Activated naive CD4-positive, alpha-beta T cell treated with anti-CD3 and anti-CD28 coated beads, Interleukin-2, amount 10 ng/mL, durations not matched to agents 7 days and 5 days (primary cell): ENCODE measurements at regions of chr3 and their contacts with region 1.

Region 1: GRCh38 chr3:45656575-45657363 is 32.4 kb upstream of the SACM1L start:
- DNase-seq: peak; percentile 91
- H3K4me3 Mint-ChIP-seq: no peak overlapping the region
- H3K27ac Mint-ChIP-seq: peak overlapping the region; percentile 52
- H3K4me1 Mint-ChIP-seq: peaks cover 18% of the 10 kb centered on the region
- H3K27me3 Mint-ChIP-seq: no peaks in the 10 kb centered on the region

Region 2: DNA sequence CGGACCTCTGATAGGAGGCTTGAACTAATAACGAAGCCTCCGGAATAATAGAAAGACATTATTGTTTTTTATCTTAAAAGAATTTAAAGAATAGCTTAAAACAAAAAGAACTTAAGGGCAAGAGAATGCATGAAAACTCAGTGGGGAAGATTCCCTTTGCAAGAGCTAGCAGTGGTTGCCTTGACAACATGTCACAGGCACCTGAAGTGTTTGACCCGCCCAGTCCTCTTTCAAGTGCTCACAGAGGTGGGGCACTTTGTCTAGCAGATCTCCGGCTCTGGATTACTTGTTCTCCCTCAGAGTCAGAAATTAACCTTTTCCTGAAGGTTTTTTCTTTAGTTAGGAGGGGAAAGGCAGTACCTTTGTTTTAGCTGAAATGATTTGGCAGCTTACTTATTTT is 230.6 kb before region 1 on chr3:
- CTCF ChIA-PET with region 1: no interaction called
- DNase-seq: no peak
- H3K4me3 Mint-ChIP-seq: no peak overlapping the region
- H3K27ac Mint-ChIP-seq: no peak overlapping the region
- H3K4me1 Mint-ChIP-seq: peaks cover 2% of the 10 kb centered on the region
- H3K27me3 Mint-ChIP-seq: no peaks in the 10 kb centered on the region

Region 3: GRCh38 chr3:45507820-45508317 is 148.9 kb before region 1 on chr3:
- CTCF ChIA-PET with region 1: interaction called, 272 read pairs
- DNase-seq: no peak
- H3K4me3 Mint-ChIP-seq: no peak overlapping the region
- H3K27ac Mint-ChIP-seq: no peak overlapping the region
- H3K4me1 Mint-ChIP-seq: no peaks in the 10 kb centered on the region
- H3K27me3 Mint-ChIP-seq: no peaks in the 10 kb centered on the region

Region 4: DNA sequence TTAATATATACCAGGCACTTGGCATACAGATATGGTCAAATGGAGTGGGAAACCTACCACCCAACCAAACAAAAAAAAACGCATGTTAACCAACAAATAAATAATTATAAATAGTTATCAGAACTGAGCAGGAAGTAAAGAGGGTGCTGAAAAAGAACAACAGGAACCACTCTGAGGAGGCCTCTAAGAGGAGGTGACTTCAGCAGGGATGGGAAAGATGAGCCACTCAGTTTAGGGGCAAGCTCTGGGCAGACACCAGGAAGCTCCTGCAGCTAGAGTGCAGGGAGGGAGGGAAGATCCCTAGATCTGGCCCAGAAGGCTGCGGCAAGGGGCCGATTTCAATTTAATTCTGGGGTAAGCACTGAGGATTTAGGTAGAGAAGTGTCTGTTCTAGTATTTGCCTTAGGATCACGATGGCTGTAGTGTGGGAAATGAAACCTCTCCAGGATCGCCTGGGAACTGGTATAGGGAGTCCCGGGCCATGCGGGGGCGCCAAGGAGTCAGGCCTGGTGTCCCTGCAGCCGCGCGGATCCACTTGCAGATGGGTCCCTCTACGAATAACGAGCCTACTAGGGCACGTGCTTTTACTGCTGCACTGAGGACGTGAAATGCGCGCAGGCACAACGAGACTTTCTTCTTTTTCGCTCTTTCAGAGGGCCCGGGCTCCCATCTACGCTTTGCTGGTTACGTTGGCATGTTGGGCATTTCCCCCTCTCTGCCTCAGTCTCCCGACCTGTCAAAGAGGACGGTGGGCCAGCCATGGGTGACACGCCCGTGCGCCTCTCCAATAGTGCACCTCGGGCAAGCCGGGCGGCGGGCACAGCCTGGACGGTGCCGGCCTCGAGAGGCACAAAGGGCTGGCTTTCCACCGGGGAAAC is 63.7 kb before region 1 on chr3:
- CTCF ChIA-PET with region 1: interaction called, 10 read pairs
- DNase-seq: peak; percentile 80
- H3K4me3 Mint-ChIP-seq: peak overlapping the region; percentile 73
- H3K27ac Mint-ChIP-seq: peak overlapping the region; percentile 91
- H3K4me1 Mint-ChIP-seq: peaks cover 52% of the 10 kb centered on the region
- H3K27me3 Mint-ChIP-seq: peaks cover 23% of the 10 kb centered on the region

Region 5: DNA sequence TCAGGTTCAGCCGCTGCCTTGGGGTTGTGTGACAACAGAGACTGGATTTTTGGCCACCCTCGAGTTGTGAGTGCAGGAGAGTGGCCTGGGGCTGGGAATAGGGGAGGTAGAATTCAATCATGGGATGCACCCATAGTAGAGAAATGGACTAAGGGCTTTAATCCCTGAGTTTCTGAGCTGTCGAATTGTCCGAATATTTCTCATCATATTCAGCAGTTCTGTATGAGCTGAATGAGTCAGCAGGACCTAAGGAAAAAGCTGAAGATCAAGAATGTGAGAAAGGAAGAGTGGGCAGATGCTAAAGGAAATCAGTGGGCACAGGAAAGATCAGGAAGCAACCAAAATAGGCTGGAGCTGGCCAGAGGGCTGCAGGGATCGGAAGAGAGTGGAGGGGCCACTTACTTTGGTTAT is 12.0 kb before region 1 on chr3:
- CTCF ChIA-PET with region 1: interaction called, 10 read pairs
- DNase-seq: no peak
- H3K4me3 Mint-ChIP-seq: no peak overlapping the region
- H3K27ac Mint-ChIP-seq: no peak overlapping the region
- H3K4me1 Mint-ChIP-seq: peaks cover 8% of the 10 kb centered on the region
- H3K27me3 Mint-ChIP-seq: no peaks in the 10 kb centered on the region

Region 6: GRCh38 chr3:45688882-45689756 is 32.4 kb after region 1 on chr3 and contains the start of gene SACM1L:
- CTCF ChIA-PET with region 1: interaction called, 14 read pairs
- DNase-seq: peak; percentile 98
- H3K4me3 Mint-ChIP-seq: peak within 1 kb of the TSS; percentile 85
- H3K27ac Mint-ChIP-seq: peak within 1 kb of the TSS; percentile 94
- H3K4me1 Mint-ChIP-seq: peaks cover 53% of the 10 kb centered on the region
- H3K27me3 Mint-ChIP-seq: peaks cover 6% of the 10 kb centered on the region

Region 7: DNA sequence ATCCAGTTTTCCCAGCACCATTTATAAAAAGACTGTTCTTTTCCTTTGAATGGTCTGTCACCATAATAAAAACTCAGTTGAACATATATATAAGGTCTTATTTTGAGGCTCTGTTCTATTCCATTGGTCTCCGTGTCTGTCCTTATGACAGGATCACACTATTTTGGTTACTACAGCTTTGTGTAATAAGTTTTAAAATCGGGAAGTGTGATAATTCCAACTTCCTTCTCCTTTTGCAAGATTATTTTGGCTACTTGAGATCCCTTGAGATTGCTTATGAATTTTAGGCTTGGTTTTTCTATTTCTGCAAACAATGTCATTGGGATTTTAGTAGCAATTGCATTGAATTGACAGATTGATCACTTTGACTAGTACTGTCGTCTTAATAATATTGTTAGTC is 68.1 kb after region 1 on chr3:
- CTCF ChIA-PET with region 1: no interaction called
- DNase-seq: no peak
- H3K4me3 Mint-ChIP-seq: no peak overlapping the region
- H3K27ac Mint-ChIP-seq: no peak overlapping the region
- H3K4me1 Mint-ChIP-seq: peaks cover 5% of the 10 kb centered on the region
- H3K27me3 Mint-ChIP-seq: no peaks in the 10 kb centered on the region